Esophagus squamous epithelium (tissue), 5 donors: ENCODE measurements at regions of chr5 and their contacts with region 1.

Region 1: GRCh38 chr5:116947691-116948528 is 373.3 kb upstream of the SEMA6A start:
- DNase-seq: no peak
- H3K4me3 ChIP-seq: no peak overlapping the region
- H3K27ac ChIP-seq: no peak overlapping the region
- H3K4me1 ChIP-seq: peaks cover 0 to 5% (median 0%) of the 10 kb centered on the region in 3 donors
- H3K27me3 ChIP-seq: no peaks in the 10 kb centered on the region
- CTCF ChIP-seq: peak; percentile 36 to 81 (median 66)
- POLR2A ChIP-seq: no peak

Region 2: GRCh38 chr5:116574367-116575325 is 373.3 kb before region 1 on chr5 and contains the start of gene SEMA6A:
- intact Hi-C with region 1: loop called (anchors 10 kb)
- DNase-seq: peak; percentile 21
- H3K4me3 ChIP-seq: peak within 1 kb of the TSS; percentile 40 to 81 (median 68)
- H3K27ac ChIP-seq: peak within 1 kb of the TSS; percentile 68 to 89 (median 82)
- H3K4me1 ChIP-seq: peaks cover 0 to 53% (median 12%) of the 10 kb centered on the region in 3 donors
- H3K27me3 ChIP-seq: peaks cover 0 to 57% (median 0%) of the 10 kb centered on the region in 4 donors
- CTCF ChIP-seq: peak in 3 of 6 experiments; percentile 9 to 17 (median 13)
- POLR2A ChIP-seq: peak in 3 of 4 donors; percentile 40 to 86 (median 57)
- total RNA-seq, gene SEMA6A: 3.0 to 28.6 (median 4.3) TPM